Naive thymus-derived CD4-positive, alpha-beta T cell (primary cell): ENCODE measurements at regions of chr19 and their contacts with region 1.

Region 1: DNA sequence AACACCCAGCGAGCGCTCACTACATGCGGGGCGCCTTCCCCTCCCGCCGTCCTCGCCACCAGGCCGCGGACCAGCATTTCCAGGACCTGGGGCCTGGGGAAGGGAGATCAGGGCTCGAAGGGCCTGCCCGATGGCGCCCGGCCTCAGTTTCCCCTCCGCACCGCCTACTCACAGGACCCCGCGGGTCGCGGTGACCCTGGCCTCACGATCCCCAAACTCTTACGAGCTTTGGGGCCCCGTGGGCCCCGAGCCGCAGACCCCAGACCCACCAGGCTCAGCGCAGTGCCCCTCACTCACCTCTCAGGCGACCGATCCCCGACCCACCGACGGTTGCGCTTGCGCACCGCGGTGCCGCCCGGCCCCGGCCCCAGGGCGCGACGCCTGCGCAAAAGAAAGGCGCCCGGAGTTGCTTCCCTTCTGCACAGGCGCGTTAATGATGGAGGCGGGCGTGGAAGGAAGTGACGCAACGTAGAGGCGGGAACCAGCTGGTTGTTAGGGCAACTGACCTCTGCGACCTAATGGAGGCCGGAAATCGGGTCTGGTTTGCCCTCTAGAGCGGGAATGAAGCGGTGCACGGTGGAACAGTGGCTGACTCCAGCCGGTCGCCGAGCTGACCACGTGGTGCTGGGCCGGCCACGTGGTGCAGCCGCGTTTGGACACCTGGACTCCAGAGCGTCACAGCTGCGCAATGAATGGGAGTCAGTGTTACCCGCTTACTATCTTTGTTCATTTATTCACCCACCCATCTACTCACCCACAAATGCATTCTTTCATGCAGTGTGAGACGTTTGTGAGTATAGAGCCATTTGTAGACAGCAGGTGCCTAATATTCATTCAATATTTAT is at the start of gene SGTA:
- DNase-seq: peak; percentile 82 to 97 (median 95)
- ATAC-seq: peak; percentile 73
- H3K4me3 ChIP-seq: peak within 1 kb of the TSS; percentile 90
- H3K4me3 Mint-ChIP-seq: peak within 1 kb of the TSS; percentile 83 to 98 (median 88)
- H3K27ac ChIP-seq: peak within 1 kb of the TSS; percentile 95
- H3K27ac Mint-ChIP-seq: peak within 1 kb of the TSS; percentile 78 to 97 (median 92)
- H3K4me1 ChIP-seq: peaks cover 33 to 35% of the 10 kb centered on the region in 2 donors
- H3K4me1 Mint-ChIP-seq: peaks cover 29 to 64% (median 51%) of the 10 kb centered on the region in 7 donors
- H3K27me3 ChIP-seq: no peaks in the 10 kb centered on the region
- H3K27me3 Mint-ChIP-seq: no peaks in the 10 kb centered on the region
- total RNA-seq, gene SGTA: 32.2 to 47.8 (median 37.9) TPM

Region 2: DNA sequence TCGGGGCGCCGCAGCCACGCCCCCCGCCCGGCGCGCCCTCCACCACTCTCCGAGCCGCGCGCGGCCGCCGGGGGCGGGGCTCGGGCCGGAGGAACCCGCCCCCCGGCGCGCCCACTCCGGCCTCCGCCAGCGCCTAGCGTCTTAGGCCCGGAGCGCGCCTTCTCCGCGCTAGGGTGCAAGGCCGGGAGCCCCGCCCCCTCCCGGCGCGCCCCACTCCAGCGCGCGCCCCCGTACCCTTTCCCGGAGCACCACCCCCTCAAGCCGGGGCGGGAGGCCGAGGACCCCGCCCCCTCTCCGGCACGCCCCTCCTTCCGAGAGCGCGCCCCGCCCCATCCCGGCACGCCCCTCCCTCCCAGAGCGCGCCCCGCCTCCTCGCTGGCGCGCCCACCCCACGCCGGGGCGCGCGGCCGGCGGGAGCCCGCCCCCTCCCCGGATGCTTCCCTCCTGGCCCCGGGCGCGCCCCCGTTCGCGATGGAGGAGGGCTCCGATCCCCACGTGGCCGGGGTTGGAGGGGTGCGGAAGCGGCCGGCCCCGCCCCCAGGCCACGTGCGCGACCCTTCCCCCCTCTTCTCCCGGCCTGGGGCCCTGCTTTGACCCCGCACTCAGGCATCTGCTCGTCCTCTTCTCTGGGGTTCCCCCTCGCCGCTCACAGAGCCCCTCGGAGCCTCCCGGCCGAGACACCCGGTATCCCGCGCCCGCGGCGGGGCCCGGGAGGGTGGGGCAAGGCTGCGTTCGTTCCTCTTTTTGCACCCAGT is 919.3 kb before region 1 on chr19:
- CTCF ChIA-PET with region 1: no interaction called
- POLR2A ChIA-PET with region 1: no interaction called
- intact Hi-C with region 1: loop called in 1 of 2 experiments (anchors 5 kb)
- DNase-seq: peak; percentile 89 to 96 (median 94)
- ATAC-seq: peak; percentile 84
- H3K4me3 ChIP-seq: peak overlapping the region; percentile 79
- H3K4me3 Mint-ChIP-seq: peak overlapping the region; percentile 38 to 82 (median 73)
- H3K27ac ChIP-seq: peak overlapping the region; percentile 78
- H3K27ac Mint-ChIP-seq: peak overlapping the region; percentile 15 to 86 (median 76)
- H3K4me1 ChIP-seq: peaks cover 13 to 32% of the 10 kb centered on the region in 2 donors
- H3K4me1 Mint-ChIP-seq: peaks cover 6 to 46% (median 32%) of the 10 kb centered on the region in 7 donors
- H3K27me3 ChIP-seq: no peaks in the 10 kb centered on the region
- H3K27me3 Mint-ChIP-seq: no peaks in the 10 kb centered on the region

Region 3: DNA sequence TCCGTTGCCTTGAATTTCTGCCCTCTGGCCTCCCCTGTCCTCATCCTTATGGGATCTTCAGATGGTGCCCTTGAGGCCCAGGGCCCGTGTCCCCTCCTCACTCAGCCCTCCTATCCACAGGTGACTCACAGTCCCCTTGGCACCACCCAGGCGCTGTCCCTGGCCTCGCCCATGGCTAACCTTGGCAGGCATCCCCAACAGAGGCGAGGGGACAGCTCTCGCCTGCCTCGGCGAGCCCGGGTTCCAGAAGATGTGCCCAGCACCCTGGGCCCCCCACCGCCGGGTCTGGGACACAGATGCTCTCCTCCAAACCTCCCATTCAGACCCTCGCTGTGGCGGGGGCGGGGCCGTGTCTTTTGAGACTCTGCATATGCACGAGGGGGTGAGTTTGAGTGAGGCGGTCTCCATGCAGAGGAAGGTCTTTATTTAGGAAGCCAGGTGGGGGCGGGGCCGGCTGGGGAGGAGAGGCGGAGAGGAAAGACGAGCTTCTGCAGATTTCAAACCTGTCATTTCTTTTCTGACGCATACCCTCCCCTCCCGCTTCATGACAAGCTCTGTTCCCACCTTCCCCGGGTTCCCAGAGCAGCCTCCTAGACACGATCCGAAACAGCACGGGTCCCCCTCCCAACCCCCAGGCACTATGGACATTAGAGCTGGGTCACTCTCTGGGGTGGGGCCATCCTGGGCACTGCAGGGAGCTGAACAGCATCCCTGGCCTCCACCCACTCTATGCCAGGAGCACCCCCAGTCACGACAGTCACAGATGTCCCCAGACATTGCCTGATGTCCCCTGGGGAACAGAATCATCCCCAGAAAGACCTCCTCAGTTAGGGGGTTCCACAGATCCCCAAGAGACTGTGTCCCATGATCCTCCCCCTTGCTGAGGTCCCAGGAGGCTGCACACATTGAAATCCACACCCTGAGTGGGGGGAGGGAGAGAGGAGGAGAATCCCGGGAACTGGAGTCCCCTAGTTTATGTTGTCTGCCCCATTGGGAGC is 129.1 kb before region 1 on chr19:
- CTCF ChIA-PET with region 1: no interaction called
- POLR2A ChIA-PET with region 1: no interaction called
- intact Hi-C with region 1: no loop called
- DNase-seq: no peak
- ATAC-seq: no peak
- H3K4me3 ChIP-seq: no peak overlapping the region
- H3K4me3 Mint-ChIP-seq: no peak overlapping the region
- H3K27ac ChIP-seq: no peak overlapping the region
- H3K27ac Mint-ChIP-seq: no peak overlapping the region
- H3K4me1 ChIP-seq: no peaks in the 10 kb centered on the region
- H3K4me1 Mint-ChIP-seq: no peaks in the 10 kb centered on the region
- H3K27me3 ChIP-seq: no peaks in the 10 kb centered on the region
- H3K27me3 Mint-ChIP-seq: no peaks in the 10 kb centered on the region

Region 4: DNA sequence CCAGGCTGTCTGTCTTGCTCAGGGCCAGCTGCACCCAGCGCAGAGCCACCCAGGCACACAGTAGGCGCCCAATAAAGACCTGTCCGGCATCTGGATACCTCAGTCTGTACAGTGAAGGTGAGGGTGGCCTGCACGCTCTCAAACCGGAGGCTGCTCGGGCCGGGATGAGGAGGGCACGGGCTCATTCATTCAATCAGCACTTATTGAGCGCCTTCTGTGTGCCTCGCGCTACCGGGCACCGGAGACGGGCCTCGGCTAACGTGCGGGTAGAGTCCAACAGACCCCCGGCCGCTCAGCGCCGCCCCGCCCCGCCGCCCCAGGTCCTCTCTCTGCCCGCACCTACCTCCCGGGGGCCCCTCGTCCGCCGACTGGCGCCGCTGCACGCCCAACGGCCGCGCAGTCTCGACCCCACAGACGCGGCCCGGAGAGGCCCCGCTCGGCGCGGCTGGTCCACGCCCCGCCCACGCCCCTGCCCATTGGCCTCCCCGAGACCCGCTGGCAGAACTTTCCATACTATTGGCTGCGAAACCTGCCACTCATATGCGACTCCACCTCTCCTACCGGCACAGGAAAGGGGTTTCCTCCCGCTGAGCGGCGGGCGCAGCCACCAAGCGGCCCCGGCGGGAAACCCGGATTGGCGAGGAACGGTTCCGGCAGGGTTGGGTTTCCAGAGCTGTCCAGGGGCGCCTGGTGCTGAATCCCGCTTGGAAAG is 43.4 kb before region 1 on chr19 and contains the start of gene SLC39A3:
- CTCF ChIA-PET with region 1: interaction called, 5 read pairs
- POLR2A ChIA-PET with region 1: no interaction called
- intact Hi-C with region 1: loop called (anchors 1 to 2 kb)
- DNase-seq: peak; percentile 94 to 99 (median 98)
- ATAC-seq: peak; percentile 100
- H3K4me3 ChIP-seq: peak within 1 kb of the TSS; percentile 72
- H3K4me3 Mint-ChIP-seq: peak within 1 kb of the TSS; percentile 80 to 90 (median 86)
- H3K27ac ChIP-seq: peak within 1 kb of the TSS; percentile 82
- H3K27ac Mint-ChIP-seq: peak within 1 kb of the TSS in 8 of 9 donors; percentile 36 to 87 (median 72)
- H3K4me1 ChIP-seq: peaks cover 7 to 8% of the 10 kb centered on the region in 2 donors
- H3K4me1 Mint-ChIP-seq: peaks cover 8 to 29% (median 24%) of the 10 kb centered on the region in 7 donors
- H3K27me3 ChIP-seq: no peaks in the 10 kb centered on the region
- H3K27me3 Mint-ChIP-seq: peaks cover 6 to 18% (median 14%) of the 10 kb centered on the region in 5 donors
- total RNA-seq, gene SLC39A3: 10.1 to 28.5 (median 17.8) TPM

Region 5: GRCh38 chr19:2848616-2849015 is 65.5 kb after region 1 on chr19:
- CTCF ChIA-PET with region 1: no interaction called
- POLR2A ChIA-PET with region 1: no interaction called
- intact Hi-C with region 1: no loop called
- DNase-seq: no peak
- ATAC-seq: no peak
- H3K4me3 ChIP-seq: no peak overlapping the region
- H3K4me3 Mint-ChIP-seq: no peak overlapping the region
- H3K27ac ChIP-seq: no peak overlapping the region
- H3K27ac Mint-ChIP-seq: no peak overlapping the region
- H3K4me1 ChIP-seq: peaks cover 0 to 3% of the 10 kb centered on the region in 2 donors
- H3K4me1 Mint-ChIP-seq: peaks cover 0 to 31% (median 20%) of the 10 kb centered on the region in 7 donors
- H3K27me3 ChIP-seq: no peaks in the 10 kb centered on the region
- H3K27me3 Mint-ChIP-seq: no peaks in the 10 kb centered on the region

Region 6: GRCh38 chr19:2900296-2901252 is 117.4 kb after region 1 on chr19 and contains the start of gene ZNF57:
- CTCF ChIA-PET with region 1: no interaction called
- POLR2A ChIA-PET with region 1: no interaction called
- intact Hi-C with region 1: loop called in 1 of 2 experiments (anchors 1 kb)
- DNase-seq: peak; percentile 83 to 98 (median 96)
- ATAC-seq: peak; percentile 99
- H3K4me3 ChIP-seq: peak within 1 kb of the TSS; percentile 79
- H3K4me3 Mint-ChIP-seq: peak within 1 kb of the TSS; percentile 88 to 99 (median 96)
- H3K27ac ChIP-seq: peak within 1 kb of the TSS; percentile 63
- H3K27ac Mint-ChIP-seq: peak within 1 kb of the TSS; percentile 55 to 91 (median 85)
- H3K4me1 ChIP-seq: peaks cover 0 to 4% of the 10 kb centered on the region in 2 donors
- H3K4me1 Mint-ChIP-seq: peaks cover 11 to 28% (median 21%) of the 10 kb centered on the region in 7 donors
- H3K27me3 ChIP-seq: no peaks in the 10 kb centered on the region
- H3K27me3 Mint-ChIP-seq: no peaks in the 10 kb centered on the region
- total RNA-seq, gene ZNF57: 1.7 to 5.0 (median 2.2) TPM

Region 7: DNA sequence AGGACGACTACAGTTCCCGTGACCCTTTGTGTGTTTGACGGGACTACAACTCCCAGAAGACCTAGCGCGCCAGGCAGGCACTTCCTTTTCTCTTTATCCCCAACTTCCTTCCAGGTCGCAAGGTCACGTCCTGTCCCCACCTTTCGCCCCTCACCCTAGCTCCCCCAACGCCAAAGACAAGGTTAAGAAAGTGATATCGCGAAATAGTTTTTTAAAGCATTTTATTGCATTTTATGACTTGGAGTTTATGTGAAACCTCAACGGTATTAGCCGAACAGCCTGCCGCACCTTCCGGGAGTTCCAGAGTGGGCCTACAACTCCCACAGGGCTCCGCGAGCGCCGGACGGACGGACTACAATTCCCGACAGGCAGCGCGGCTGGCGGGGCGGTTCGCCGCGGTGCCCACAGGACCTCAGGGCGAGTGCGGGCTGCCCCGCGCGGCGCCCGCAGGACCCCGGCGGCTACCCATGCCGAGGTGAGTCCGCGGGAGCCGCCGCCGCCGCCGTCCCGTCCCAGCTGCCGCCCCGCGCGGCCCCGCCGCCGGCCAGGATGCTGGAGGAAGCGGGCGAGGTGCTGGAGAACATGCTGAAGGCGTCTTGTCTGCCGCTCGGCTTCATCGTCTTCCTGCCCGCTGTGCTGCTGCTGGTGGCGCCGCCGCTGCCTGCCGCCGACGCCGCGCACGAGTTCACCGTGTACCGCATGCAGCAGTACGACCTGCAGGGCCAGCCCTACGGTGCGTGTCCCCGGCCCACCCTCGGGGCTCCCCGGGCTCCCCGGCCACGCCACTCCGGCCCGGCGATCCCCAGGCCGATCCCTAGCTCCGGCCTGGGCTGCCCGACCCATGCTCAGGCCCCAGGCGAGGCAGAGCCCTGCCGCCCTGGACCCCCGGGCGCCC is 402.6 kb after region 1 on chr19 and contains the start of gene NCLN:
- CTCF ChIA-PET with region 1: no interaction called
- POLR2A ChIA-PET with region 1: no interaction called
- intact Hi-C with region 1: loop called in 1 of 2 experiments (anchors 1 kb)
- DNase-seq: peak; percentile 92 to 98 (median 95)
- ATAC-seq: peak; percentile 94
- H3K4me3 ChIP-seq: peak within 1 kb of the TSS; percentile 71
- H3K4me3 Mint-ChIP-seq: peak within 1 kb of the TSS; percentile 86 to 99 (median 94)
- H3K27ac ChIP-seq: peak within 1 kb of the TSS; percentile 74
- H3K27ac Mint-ChIP-seq: peak within 1 kb of the TSS; percentile 89 to 99 (median 91)
- H3K4me1 ChIP-seq: peaks cover 53 to 63% of the 10 kb centered on the region in 2 donors
- H3K4me1 Mint-ChIP-seq: peaks cover 43 to 66% (median 54%) of the 10 kb centered on the region in 7 donors
- H3K27me3 ChIP-seq: no peaks in the 10 kb centered on the region
- H3K27me3 Mint-ChIP-seq: peaks cover 0 to 2% (median 0%) of the 10 kb centered on the region in 5 donors
- total RNA-seq, gene NCLN: 45.4 to 64.7 (median 53.7) TPM

Region 8: DNA sequence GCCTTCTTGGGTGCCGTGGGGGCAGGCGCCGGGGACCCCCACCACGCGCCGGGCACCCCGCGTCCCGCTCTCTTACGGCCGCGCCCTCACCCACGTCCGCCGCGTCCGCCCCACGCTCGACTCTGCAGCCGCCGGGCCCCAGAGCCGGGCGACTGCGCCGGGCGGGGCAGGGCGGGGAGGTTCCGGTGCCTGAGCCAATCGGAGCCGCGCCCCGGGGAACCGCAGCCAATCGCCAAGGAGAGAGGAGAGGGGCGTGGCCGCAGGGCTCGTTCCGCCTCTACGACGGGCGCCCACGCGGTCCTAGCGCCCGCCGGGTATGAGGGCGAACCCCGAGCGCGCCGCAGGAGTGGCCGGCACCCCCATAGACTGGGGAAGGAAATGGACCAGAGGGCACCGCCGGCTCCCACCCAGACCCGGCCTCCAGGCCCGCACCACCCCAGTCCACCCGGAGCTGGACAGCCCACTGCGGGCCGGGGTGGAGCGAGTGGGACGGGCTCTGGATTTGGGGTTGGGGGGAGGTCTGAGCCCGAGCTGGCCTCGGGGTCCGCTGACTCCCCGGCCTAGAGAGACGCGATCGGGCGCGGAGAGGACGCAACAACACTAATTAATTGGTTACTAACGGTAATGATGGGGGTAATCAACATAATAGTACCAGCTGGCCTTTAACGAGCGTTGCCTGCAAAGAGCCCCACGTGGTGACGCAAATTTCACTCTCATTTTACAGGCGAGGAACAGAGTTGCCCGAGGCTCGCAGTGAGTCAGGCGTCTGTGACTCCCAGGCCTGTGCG is 774.5 kb after region 1 on chr19 and contains the start of gene MFSD12:
- CTCF ChIA-PET with region 1: no interaction called
- POLR2A ChIA-PET with region 1: interaction called, 3 read pairs
- intact Hi-C with region 1: loop called in 1 of 2 experiments (anchors 5 kb)
- DNase-seq: peak; percentile 88 to 98 (median 93)
- ATAC-seq: peak; percentile 94
- H3K4me3 ChIP-seq: peak within 1 kb of the TSS; percentile 90
- H3K4me3 Mint-ChIP-seq: peak within 1 kb of the TSS; percentile 92 to 100 (median 96)
- H3K27ac ChIP-seq: peak within 1 kb of the TSS; percentile 83
- H3K27ac Mint-ChIP-seq: peak within 1 kb of the TSS; percentile 92 to 97 (median 95)
- H3K4me1 ChIP-seq: peaks cover 25 to 30% of the 10 kb centered on the region in 2 donors
- H3K4me1 Mint-ChIP-seq: peaks cover 18 to 40% (median 38%) of the 10 kb centered on the region in 7 donors
- H3K27me3 ChIP-seq: no peaks in the 10 kb centered on the region
- H3K27me3 Mint-ChIP-seq: no peaks in the 10 kb centered on the region
- total RNA-seq, gene MFSD12: 95.2 to 153 (median 101) TPM